ENCODE measurements at regions of chr20 and their contacts with region 1.

Region 1: DNA sequence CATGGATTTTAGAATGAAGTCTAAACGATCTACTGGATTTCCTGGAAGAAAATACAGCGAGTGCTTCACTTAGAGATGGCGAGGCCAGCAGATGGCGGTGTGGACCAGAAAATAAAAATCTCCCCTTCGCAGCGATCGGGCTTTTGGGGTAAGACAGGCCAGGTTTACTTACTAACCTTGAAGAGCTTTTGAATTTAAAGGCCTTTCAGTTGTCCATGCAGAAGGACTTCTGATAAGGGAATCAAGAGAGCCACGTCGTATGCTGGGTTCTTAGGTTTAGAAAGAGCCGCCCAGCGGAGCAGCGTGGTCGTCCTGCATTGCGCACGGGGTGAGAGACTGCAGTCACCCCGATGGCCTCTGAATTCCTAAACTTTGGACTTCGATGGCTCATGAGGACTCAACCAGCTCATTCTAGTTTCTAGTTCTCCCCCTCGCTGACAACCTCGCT is 125.2 kb upstream of the RALGAPA2 start:
- DNase-seq: peak; percentile 76
- ATAC-seq: peak; percentile 66
- H3K4me3 ChIP-seq: no peak overlapping the region
- H3K27ac ChIP-seq: no peak overlapping the region
- H3K4me1 ChIP-seq: no peaks in the 10 kb centered on the region
- H3K27me3 ChIP-seq: peaks cover 39% of the 10 kb centered on the region
- CTCF ChIP-seq: peak; percentile 92

Region 2: DNA sequence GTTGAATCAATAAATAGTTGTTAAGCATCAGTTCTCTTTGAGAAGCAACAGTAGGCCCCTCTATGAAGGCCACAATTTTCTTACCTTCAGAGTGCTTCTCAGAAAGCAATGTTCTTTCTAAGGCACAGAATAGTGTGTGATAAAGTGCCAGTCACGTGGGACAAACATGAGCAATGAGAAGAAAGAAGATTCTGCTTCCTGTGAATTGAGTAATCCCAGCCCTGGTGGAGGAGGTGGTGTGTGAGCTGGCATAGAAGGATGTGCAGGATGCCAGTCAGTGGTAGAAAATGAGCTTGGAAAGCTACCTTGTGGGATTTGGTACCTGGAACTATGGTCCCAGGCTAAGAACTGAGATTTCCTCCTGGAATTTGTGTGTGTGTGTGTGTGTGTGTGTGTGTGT is 310.0 kb after region 1 on chr20:
- CTCF ChIA-PET with region 1: no interaction called
- POLR2A ChIA-PET with region 1: no interaction called
- intact Hi-C with region 1: no loop called
- DNase-seq: peak; percentile 57
- ATAC-seq: peak; percentile 38; the same call in 1 of the 2 replicates
- H3K4me3 ChIP-seq: no peak overlapping the region
- H3K27ac ChIP-seq: no peak overlapping the region
- H3K4me1 ChIP-seq: 0 out of 2 replicates have a peak, but pooled peaks cover 6% of the 10 kb centered on the region
- H3K27me3 ChIP-seq: no peaks in the 10 kb centered on the region
- CTCF ChIP-seq: no peak

Region 3: GRCh38 chr20:21505161-21505809 is 667.7 kb after region 1 on chr20:
- CTCF ChIA-PET with region 1: interaction called, 6 read pairs
- POLR2A ChIA-PET with region 1: no interaction called
- intact Hi-C with region 1: loop called (anchors 2 kb)
- DNase-seq: peak; percentile 74
- ATAC-seq: peak; percentile 63
- H3K4me3 ChIP-seq: peak overlapping the region; percentile 55
- H3K27ac ChIP-seq: no peak overlapping the region
- H3K4me1 ChIP-seq: peaks cover 8% of the 10 kb centered on the region
- H3K27me3 ChIP-seq: peaks cover 38% of the 10 kb centered on the region
- CTCF ChIP-seq: peak; percentile 98

Region 4: DNA sequence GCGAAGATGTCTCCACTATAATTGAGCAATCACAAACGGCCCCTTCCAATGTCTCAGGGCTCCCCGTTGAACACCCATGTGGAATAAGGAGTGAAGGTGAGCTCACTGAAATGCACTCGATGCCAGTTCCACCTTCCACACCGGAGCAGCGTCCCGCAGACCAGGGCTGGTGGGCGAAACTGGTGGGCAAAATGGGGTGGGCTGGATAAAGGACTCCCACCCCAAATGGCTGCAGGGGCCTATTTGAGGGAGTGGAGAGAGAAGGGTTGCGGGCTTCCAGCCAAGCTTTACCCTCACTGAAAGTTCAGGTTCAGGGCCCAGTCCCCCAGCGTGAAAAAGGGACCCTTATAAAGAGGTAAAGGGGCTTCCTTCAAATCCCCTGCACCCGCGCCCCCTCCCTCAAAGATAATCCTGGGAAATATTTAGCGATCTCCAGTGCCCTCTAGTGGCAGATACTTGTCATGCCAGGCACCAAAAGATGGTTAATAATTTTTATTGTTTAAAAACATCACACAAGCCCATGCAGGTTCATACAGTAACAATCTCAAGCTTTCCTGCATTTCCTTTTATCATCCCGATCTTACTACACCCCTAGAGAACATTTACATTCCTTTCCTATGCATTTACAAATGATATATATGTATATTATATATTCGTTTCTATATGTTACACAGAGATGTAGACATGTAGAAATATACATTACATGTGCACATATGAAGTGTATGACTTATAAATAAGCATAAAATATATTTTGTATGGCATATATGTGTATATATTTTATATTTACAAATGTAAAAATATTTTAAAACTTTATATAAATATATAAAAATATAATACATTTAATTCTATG is 734.5 kb after region 1 on chr20:
- CTCF ChIA-PET with region 1: no interaction called
- POLR2A ChIA-PET with region 1: no interaction called
- intact Hi-C with region 1: loop called (anchors 1 kb)
- DNase-seq: peak; percentile 34
- ATAC-seq: no peak; the same call in 1 of the 2 replicates
- H3K4me3 ChIP-seq: no peak overlapping the region
- H3K27ac ChIP-seq: no peak overlapping the region
- H3K4me1 ChIP-seq: no peaks in the 10 kb centered on the region
- H3K27me3 ChIP-seq: peaks cover 65% of the 10 kb centered on the region
- CTCF ChIP-seq: peak; percentile 95

Region 5: GRCh38 chr20:22312744-22313346 is 1475.2 kb after region 1 on chr20:
- CTCF ChIA-PET with region 1: no interaction called
- POLR2A ChIA-PET with region 1: no interaction called
- intact Hi-C with region 1: loop called (anchors 10 kb)
- DNase-seq: peak; percentile 66
- ATAC-seq: no peak
- H3K4me3 ChIP-seq: no peak overlapping the region
- H3K27ac ChIP-seq: no peak overlapping the region
- H3K4me1 ChIP-seq: no peaks in the 10 kb centered on the region
- H3K27me3 ChIP-seq: peaks cover 64% of the 10 kb centered on the region
- CTCF ChIP-seq: peak; percentile 83

Measured in PC-3 (cell line).